Activated naive CD4-positive, alpha-beta T cell treated with anti-CD3 and anti-CD28 coated beads, Interleukin-2, amount 10 ng/mL, durations not matched to agents 7 days and 5 days (primary cell): ENCODE measurements at regions of chr13 and their contacts with region 1.

Region 1: DNA sequence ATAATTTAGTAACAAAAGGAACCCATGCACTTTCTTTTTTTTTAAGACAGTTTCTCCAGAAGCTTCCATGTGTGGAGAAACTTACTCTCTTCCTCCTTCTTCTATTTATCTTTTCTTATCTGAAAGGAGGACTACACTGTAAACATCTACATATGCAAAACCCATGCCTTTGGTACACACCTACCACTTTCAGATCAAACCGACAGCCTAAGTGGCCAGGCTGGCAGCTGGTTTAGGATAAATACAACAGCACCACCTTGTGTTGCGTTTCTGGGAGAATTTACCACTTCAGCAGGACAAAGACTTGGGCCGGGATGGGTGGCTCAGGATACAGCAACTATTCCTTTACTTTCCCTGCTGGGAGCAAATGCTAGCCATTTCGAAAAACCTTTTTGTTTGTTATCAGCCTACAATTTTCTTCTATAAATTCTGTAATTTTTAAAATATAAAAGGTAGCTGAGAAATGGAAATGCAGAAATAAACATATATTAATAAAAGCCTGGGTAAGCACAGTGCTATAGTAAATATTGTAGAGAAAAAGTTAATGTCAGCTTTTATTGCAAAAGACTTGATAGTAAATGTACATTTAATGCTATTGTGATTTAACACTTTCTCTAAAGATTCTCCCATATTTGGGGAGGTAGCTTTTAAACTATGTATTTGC is 94.0 kb upstream of the RFC3 start:
- DNase-seq: peak; percentile 75
- H3K4me3 Mint-ChIP-seq: no peak overlapping the region
- H3K27ac Mint-ChIP-seq: no peak overlapping the region
- H3K4me1 Mint-ChIP-seq: peaks cover 18% of the 10 kb centered on the region
- H3K27me3 Mint-ChIP-seq: no peaks in the 10 kb centered on the region

Region 2: DNA sequence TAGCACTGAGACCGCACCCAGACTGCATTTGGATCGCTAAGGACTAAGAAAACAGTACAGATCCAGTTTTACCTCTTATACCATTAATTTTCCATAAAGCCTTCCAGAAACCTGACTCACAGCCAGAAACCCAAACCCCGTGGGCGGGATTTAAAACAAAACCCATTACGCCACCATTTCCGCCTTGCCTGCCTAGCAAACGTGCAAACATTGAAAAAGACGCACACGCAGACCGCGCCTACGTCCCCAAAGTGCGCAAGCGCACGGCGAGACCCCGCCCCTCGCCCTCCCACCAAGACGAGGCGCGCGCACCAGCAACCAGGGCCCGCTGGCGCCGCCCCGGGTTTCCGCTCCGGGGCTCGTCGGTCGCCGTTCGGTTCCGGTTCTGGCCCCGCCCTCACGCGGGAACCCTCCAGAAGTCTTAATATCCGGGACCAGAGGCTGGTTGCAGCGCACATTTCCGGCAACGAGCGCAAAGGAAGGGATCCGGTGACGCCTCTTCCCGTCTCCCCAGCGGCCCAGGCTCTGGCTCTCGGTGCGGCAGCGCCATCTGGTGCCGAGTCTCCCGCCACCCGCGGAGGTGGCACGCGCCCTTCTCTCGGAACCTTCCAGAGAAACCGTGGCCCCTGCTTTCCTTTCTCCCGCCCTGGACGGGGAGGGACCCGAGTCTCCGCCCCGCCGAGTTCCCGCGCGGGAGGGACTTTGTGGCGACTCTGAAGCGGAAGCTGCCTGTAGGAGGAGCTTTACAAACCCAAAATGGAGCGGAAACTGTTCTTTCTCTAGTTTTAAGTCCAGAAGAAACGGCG is 181.4 kb before region 1 on chr13:
- CTCF ChIA-PET with region 1: interaction called, 46 read pairs
- DNase-seq: peak; percentile 98
- H3K4me3 Mint-ChIP-seq: peak overlapping the region; percentile 93
- H3K27ac Mint-ChIP-seq: peak overlapping the region; percentile 100
- H3K4me1 Mint-ChIP-seq: peaks cover 34% of the 10 kb centered on the region
- H3K27me3 Mint-ChIP-seq: no peaks in the 10 kb centered on the region